ENCODE measurements at regions of chr12 and their contacts with region 1.

Region 1: DNA sequence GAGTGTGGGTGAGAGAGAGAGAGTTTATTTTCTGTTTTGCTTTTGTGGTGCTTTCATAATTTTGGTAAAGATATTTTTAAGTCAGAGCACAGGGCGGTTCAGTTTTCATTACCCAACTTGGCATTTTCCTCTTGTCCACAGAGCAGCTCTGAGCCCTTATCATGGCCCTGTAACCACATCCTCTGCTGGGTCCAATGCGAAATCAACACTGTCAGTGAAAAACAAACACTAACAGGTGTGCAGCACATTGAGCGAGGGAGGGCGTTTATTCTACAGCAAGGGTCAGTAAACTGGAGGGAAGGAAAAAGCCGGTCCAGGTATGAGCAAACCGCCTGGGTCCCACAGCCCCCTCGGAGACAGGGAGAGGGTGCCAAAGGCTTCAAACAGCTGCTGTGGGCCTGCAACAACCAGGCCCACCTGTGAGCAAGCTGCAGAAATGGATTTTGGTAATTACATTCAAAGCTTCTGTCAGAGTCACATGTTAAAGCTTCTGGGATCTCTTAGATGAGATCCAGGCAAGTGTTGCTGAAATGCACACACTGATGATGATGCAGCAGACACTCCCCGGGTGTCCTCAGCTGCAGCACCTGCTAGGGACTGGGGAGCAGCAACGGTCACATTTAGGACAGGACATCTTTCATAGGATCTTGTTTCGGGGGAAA is 132.7 kb upstream of the DYRK2 start:
- DNase-seq: peak in 8 of 9 donors; percentile 11 to 70 (median 50)
- ATAC-seq: peak; percentile 82
- H3K4me3 ChIP-seq: peak overlapping the region; percentile 37
- H3K4me3 Mint-ChIP-seq: peak overlapping the region; percentile 52 to 81 (median 72)
- H3K27ac ChIP-seq: no peak overlapping the region
- H3K27ac Mint-ChIP-seq: peak overlapping the region; percentile 40 to 90 (median 79)
- H3K4me1 ChIP-seq: peaks cover 34 to 39% of the 10 kb centered on the region in 2 donors
- H3K4me1 Mint-ChIP-seq: peaks cover 36 to 65% (median 54%) of the 10 kb centered on the region in 7 donors
- H3K27me3 ChIP-seq: no peaks in the 10 kb centered on the region
- H3K27me3 Mint-ChIP-seq: peaks cover 0 to 15% (median 0%) of the 10 kb centered on the region in 5 donors

Region 2: DNA sequence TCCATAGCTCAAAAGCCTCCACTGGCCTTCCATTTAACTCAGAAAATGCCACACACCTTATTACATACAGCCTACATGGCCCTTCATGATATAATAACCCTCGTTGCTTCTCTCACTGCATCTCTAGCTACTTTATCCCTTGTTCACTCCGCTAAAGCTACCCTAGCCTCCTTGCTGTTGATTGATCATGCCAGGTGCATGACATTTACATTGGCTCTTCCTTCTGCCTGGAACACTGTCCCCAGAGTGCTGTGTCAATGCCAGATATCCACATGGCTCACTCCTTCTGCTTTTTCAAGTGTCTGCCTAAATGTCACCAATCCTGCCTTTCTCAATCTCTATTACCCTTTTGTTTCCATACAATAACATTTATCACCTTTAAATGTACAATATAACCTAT is 188.3 kb before region 1 on chr12:
- CTCF ChIA-PET with region 1: no interaction called
- POLR2A ChIA-PET with region 1: no interaction called
- intact Hi-C with region 1: no loop called
- DNase-seq: no peak
- ATAC-seq: no peak
- H3K4me3 ChIP-seq: no peak overlapping the region
- H3K4me3 Mint-ChIP-seq: no peak overlapping the region
- H3K27ac ChIP-seq: no peak overlapping the region
- H3K27ac Mint-ChIP-seq: no peak overlapping the region
- H3K4me1 ChIP-seq: no peaks in the 10 kb centered on the region
- H3K4me1 Mint-ChIP-seq: peaks cover 0 to 6% (median 5%) of the 10 kb centered on the region in 7 donors
- H3K27me3 ChIP-seq: no peaks in the 10 kb centered on the region
- H3K27me3 Mint-ChIP-seq: no peaks in the 10 kb centered on the region

Region 3: DNA sequence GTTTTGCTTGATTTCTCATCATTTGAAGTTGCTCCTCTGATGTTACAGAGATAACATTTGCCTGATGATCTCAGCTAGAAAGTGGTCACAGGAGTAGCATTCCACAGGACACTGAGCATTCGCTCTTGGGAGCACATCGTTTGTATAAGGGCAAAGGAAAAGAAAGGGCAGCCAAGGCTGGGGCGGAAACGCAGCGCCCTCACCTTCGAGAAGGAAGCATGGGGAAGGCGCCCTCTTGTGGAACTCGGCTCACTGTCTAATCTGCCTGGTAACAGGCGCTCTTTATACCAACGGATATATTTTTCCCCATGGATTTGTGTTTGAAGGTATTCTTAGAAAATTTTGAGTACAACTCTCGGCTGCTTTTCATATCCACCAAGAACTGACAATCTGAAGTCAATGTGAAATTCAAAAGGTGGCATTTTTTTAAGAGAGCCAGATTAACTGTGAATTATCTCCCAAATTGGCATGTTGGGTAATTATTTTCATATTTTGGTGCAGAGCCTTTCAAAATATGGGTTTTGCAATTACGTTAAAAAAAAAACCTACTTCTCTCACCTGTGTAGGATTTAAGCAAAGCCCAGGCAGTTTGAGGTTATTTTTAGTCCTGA is 74.0 kb before region 1 on chr12:
- CTCF ChIA-PET with region 1: interaction called, 4 read pairs
- POLR2A ChIA-PET with region 1: no interaction called
- intact Hi-C with region 1: loop called in 1 of 2 experiments (anchors 1 kb)
- DNase-seq: peak; percentile 50 to 76 (median 72)
- ATAC-seq: peak; percentile 94
- H3K4me3 ChIP-seq: no peak overlapping the region
- H3K4me3 Mint-ChIP-seq: peak overlapping the region in 9 of 10 donors; percentile 29 to 78 (median 59)
- H3K27ac ChIP-seq: no peak overlapping the region
- H3K27ac Mint-ChIP-seq: peak overlapping the region in 8 of 9 donors; percentile 17 to 93 (median 53)
- H3K4me1 ChIP-seq: peaks cover 5 to 7% of the 10 kb centered on the region in 2 donors
- H3K4me1 Mint-ChIP-seq: peaks cover 8 to 38% (median 34%) of the 10 kb centered on the region in 7 donors
- H3K27me3 ChIP-seq: no peaks in the 10 kb centered on the region
- H3K27me3 Mint-ChIP-seq: peaks cover 0 to 8% (median 0%) of the 10 kb centered on the region in 5 donors

Region 4: DNA sequence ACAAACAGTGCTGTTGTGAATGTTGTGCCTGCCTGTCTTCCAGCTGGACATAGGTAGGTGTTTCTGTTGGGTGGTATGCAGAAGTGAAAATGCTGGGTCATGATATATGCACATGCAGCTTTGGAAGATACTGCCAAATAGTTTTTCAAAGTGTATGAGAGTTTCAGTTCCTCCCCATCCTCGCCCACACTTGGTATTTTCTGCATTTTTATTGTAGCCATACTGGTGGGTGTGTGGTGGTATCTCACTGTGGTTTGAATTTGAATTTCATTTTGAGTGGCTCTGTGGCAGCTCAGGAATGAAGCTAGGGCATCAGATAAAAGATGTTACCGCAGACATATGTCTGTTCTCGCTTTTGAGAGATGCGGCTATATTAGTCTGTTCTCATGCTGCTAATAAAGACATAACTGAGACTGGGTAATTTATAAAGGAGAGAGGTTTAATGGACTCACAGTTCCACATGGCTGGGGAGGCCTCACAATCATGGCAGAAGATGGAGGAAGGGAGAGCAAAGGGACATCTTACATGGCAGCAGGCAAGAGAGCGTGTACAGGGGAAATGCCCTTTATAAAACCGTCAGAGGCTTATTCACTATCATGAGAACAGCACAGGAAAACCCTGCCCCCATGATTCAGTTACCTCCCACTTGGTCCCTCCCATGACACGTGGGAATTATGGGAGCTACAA is 63.5 kb before region 1 on chr12:
- CTCF ChIA-PET with region 1: no interaction called
- POLR2A ChIA-PET with region 1: no interaction called
- intact Hi-C with region 1: loop called in 1 of 2 experiments (anchors 5 kb)
- DNase-seq: peak in 1 of 9 donors; percentile 32
- ATAC-seq: peak; percentile 33
- H3K4me3 ChIP-seq: no peak overlapping the region
- H3K4me3 Mint-ChIP-seq: peak overlapping the region in 4 of 10 donors; percentile 3 to 59 (median 6)
- H3K27ac ChIP-seq: no peak overlapping the region
- H3K27ac Mint-ChIP-seq: peak overlapping the region in 2 of 9 donors; percentile 7 to 31
- H3K4me1 ChIP-seq: peaks cover 12 to 28% of the 10 kb centered on the region in 2 donors
- H3K4me1 Mint-ChIP-seq: peaks cover 28 to 54% (median 42%) of the 10 kb centered on the region in 7 donors
- H3K27me3 ChIP-seq: no peaks in the 10 kb centered on the region
- H3K27me3 Mint-ChIP-seq: peaks cover 0 to 29% (median 0%) of the 10 kb centered on the region in 5 donors

Region 5: GRCh38 chr12:67482751-67483671 is 32.8 kb before region 1 on chr12:
- CTCF ChIA-PET with region 1: no interaction called
- POLR2A ChIA-PET with region 1: interaction called, 8 read pairs
- intact Hi-C with region 1: loop called (anchors 2 to 5 kb)
- DNase-seq: peak in 8 of 9 donors; percentile 47 to 89 (median 82)
- ATAC-seq: peak; percentile 89
- H3K4me3 ChIP-seq: no peak overlapping the region
- H3K4me3 Mint-ChIP-seq: peak overlapping the region in 9 of 10 donors; percentile 1 to 61 (median 26)
- H3K27ac ChIP-seq: peak overlapping the region; percentile 49
- H3K27ac Mint-ChIP-seq: peak overlapping the region; percentile 41 to 91 (median 82)
- H3K4me1 ChIP-seq: peaks cover 39 to 45% of the 10 kb centered on the region in 2 donors
- H3K4me1 Mint-ChIP-seq: peaks cover 28 to 49% (median 46%) of the 10 kb centered on the region in 7 donors
- H3K27me3 ChIP-seq: no peaks in the 10 kb centered on the region
- H3K27me3 Mint-ChIP-seq: no peaks in the 10 kb centered on the region

Region 6: DNA sequence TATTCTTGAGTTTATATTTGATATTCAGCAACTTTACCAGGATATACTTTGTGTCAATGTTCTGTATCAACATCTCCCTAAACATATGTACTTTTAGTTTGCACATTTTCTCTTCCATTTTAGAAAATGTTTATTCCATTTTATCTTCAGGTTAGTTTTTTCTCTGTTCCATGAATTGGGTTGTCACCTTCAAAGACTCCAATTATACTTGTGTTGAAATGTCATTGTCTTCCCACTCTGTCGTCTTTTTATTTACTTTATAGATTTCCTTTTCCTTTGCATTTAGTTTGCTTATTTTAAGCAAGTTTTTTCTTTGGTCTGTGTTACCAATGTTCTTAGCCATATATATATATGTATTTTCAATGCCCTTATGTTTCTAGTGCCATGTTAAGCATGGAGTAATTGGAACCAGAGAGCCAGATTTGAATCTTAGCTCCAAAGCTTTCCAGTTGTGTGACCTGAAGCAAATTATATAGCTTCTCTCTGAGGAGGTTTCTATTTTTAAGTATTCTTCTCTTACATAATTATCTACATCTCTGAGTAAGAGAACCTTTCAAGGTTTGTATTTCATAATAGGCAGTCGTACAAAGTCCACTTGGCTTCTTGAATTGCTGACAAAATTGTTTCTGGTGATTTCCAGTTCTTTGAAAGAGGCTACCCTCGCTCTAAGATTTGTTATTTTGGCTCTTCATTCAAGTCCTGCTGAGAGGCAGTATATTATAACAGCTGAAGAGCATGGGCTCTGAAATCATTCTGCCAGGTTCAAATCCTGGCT is 46.9 kb after region 1 on chr12:
- CTCF ChIA-PET with region 1: no interaction called
- POLR2A ChIA-PET with region 1: interaction called, 3 read pairs
- intact Hi-C with region 1: loop called in 1 of 2 experiments (anchors 5 kb)
- DNase-seq: no peak
- ATAC-seq: no peak
- H3K4me3 ChIP-seq: no peak overlapping the region
- H3K4me3 Mint-ChIP-seq: no peak overlapping the region
- H3K27ac ChIP-seq: no peak overlapping the region
- H3K27ac Mint-ChIP-seq: no peak overlapping the region
- H3K4me1 ChIP-seq: no peaks in the 10 kb centered on the region
- H3K4me1 Mint-ChIP-seq: peaks cover 0 to 18% (median 7%) of the 10 kb centered on the region in 7 donors
- H3K27me3 ChIP-seq: no peaks in the 10 kb centered on the region
- H3K27me3 Mint-ChIP-seq: peaks cover 0 to 18% (median 0%) of the 10 kb centered on the region in 5 donors

Region 7: GRCh38 chr12:67592216-67593011 is 76.6 kb after region 1 on chr12:
- CTCF ChIA-PET with region 1: no interaction called
- POLR2A ChIA-PET with region 1: no interaction called
- intact Hi-C with region 1: loop called in 1 of 2 experiments (anchors 5 kb)
- DNase-seq: peak in 5 of 9 donors; percentile 20 to 40 (median 33)
- ATAC-seq: no peak
- H3K4me3 ChIP-seq: no peak overlapping the region
- H3K4me3 Mint-ChIP-seq: peak overlapping the region; percentile 6 to 84 (median 46)
- H3K27ac ChIP-seq: no peak overlapping the region
- H3K27ac Mint-ChIP-seq: peak overlapping the region; percentile 79 to 94 (median 86)
- H3K4me1 ChIP-seq: peaks cover 37 to 55% of the 10 kb centered on the region in 2 donors
- H3K4me1 Mint-ChIP-seq: peaks cover 40 to 79% (median 58%) of the 10 kb centered on the region in 7 donors
- H3K27me3 ChIP-seq: no peaks in the 10 kb centered on the region
- H3K27me3 Mint-ChIP-seq: no peaks in the 10 kb centered on the region

Region 8: GRCh38 chr12:67698672-67699581 is 183.1 kb after region 1 on chr12:
- CTCF ChIA-PET with region 1: no interaction called
- POLR2A ChIA-PET with region 1: no interaction called
- intact Hi-C with region 1: loop called in 1 of 2 experiments (anchors 1 kb)
- DNase-seq: peak in 8 of 9 donors; percentile 26 to 55 (median 44)
- ATAC-seq: peak; percentile 82
- H3K4me3 ChIP-seq: peak overlapping the region; percentile 39
- H3K4me3 Mint-ChIP-seq: peak overlapping the region; percentile 71 to 86 (median 82)
- H3K27ac ChIP-seq: peak overlapping the region; percentile 62
- H3K27ac Mint-ChIP-seq: peak overlapping the region; percentile 58 to 91 (median 73)
- H3K4me1 ChIP-seq: peaks cover 20 to 24% of the 10 kb centered on the region in 2 donors
- H3K4me1 Mint-ChIP-seq: peaks cover 28 to 74% (median 60%) of the 10 kb centered on the region in 7 donors
- H3K27me3 ChIP-seq: no peaks in the 10 kb centered on the region
- H3K27me3 Mint-ChIP-seq: peaks cover 0 to 58% (median 0%) of the 10 kb centered on the region in 5 donors